ENCODE measurements at regions of chr19 and their contacts with region 1.

Region 1: GRCh38 chr19:38975214-38975860 is at the start of gene FBXO17:
- DNase-seq: peak; percentile 84 to 87
- ATAC-seq: peak; percentile 83
- H3K4me3 ChIP-seq: peak within 1 kb of the TSS; percentile 51
- H3K27ac ChIP-seq: peak within 1 kb of the TSS; percentile 91 to 94
- H3K4me1 ChIP-seq: peaks cover 51% of the 10 kb centered on the region
- CTCF ChIP-seq: no peak; the same call in 2 of the 3 replicates
- EP300 ChIP-seq: 0 out of 5 replicates have a peak, but pooled peaks of 1 of the 2 experiments have one; percentile 6
- POLR2A ChIP-seq: peak; percentile 41
- RAD21 ChIP-seq: 0 out of 5 replicates have a peak, but pooled peaks have one; percentile 11 to 16
- polyA plus RNA-seq, gene FBXO17: 68.1 and 73.1 TPM in 2 replicates

Region 2: DNA sequence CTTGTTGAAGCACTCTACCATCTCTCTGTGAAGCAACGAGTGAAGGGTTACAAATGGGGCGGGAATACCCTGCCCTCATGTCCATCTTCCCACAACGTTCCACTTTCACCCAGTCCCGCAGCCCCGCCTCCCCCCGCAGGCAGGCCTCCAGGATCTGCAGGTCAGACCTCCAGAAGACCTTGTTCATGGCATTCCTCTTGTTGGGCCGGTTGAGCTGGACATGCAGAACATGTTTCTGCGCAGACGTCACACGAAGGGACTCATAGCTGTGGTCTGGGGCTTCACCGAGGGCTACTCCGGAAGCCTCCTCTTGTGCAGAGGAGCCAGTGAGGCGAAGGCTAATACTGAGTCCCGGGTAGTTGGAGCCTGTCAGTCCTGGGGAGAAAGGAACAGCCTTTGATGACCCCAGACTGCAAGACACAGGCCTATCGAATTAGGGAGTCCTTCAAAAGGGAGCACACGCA is 144.2 kb before region 1 on chr19:
- CTCF ChIA-PET with region 1: no interaction called
- POLR2A ChIA-PET with region 1: no interaction called
- DNase-seq: peak; percentile 73 to 78
- ATAC-seq: peak; percentile 57 to 58
- H3K4me3 ChIP-seq: peak overlapping the region; percentile 55
- H3K27ac ChIP-seq: peak overlapping the region; percentile 88
- H3K4me1 ChIP-seq: peaks cover 49% of the 10 kb centered on the region
- CTCF ChIP-seq: no peak
- EP300 ChIP-seq: no peak
- POLR2A ChIP-seq: no peak
- RAD21 ChIP-seq: no peak

Region 3: DNA sequence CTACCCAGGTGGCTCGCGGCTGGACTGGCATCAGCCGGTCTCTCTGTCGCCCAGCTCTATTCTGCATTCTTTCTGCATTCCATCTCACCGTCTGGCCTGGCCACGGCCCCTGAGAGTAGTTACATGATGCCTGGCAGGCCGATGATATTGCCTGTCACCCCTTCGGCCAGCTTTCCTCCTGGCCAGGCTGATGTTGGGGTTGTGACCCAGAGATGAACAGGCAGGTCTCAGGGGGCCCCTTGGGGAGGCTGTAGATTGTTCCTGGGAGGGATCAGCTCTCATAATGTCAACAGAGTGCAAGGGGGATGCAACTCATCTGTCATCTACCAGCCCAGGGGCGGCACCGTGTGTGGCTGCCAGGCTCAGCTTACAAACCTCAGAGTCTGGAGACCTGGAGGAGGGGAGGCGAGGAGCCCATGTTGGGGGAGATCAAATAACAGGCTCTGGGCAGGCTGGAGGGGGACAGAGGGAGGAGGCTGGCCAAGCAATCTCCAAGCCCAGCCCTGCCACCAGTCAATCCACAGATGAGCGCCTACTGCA is 13.8 kb after region 1 on chr19:
- CTCF ChIA-PET with region 1: interaction called, 344 read pairs
- POLR2A ChIA-PET with region 1: interaction called, 15 read pairs
- DNase-seq: peak in 1 of 2 experiments; percentile 55
- ATAC-seq: peak; percentile 72 to 76
- H3K4me3 ChIP-seq: no peak overlapping the region
- H3K27ac ChIP-seq: peak overlapping the region; percentile 21 to 71; a peak in 3 of 6 replicates
- H3K4me1 ChIP-seq: peaks cover 37% of the 10 kb centered on the region
- CTCF ChIP-seq: no peak
- EP300 ChIP-seq: no peak
- POLR2A ChIP-seq: no peak
- RAD21 ChIP-seq: no peak

Region 4: GRCh38 chr19:39008137-39008536 is 32.8 kb after region 1 on chr19:
- CTCF ChIA-PET with region 1: interaction called, 31 read pairs
- POLR2A ChIA-PET with region 1: no interaction called
- DNase-seq: no peak
- ATAC-seq: no peak
- H3K4me3 ChIP-seq: no peak overlapping the region
- H3K27ac ChIP-seq: no peak overlapping the region
- H3K4me1 ChIP-seq: no peaks in the 10 kb centered on the region
- CTCF ChIP-seq: no peak
- EP300 ChIP-seq: no peak
- POLR2A ChIP-seq: no peak
- RAD21 ChIP-seq: no peak

Region 5: GRCh38 chr19:39021063-39021462 is 45.7 kb after region 1 on chr19:
- CTCF ChIA-PET with region 1: interaction called, 30 read pairs
- POLR2A ChIA-PET with region 1: interaction called, 4 read pairs
- DNase-seq: no peak
- ATAC-seq: no peak
- H3K4me3 ChIP-seq: no peak overlapping the region
- H3K27ac ChIP-seq: no peak overlapping the region
- H3K4me1 ChIP-seq: no peaks in the 10 kb centered on the region
- CTCF ChIP-seq: no peak
- EP300 ChIP-seq: no peak
- POLR2A ChIP-seq: no peak
- RAD21 ChIP-seq: no peak

Region 6: GRCh38 chr19:39078436-39079200 is 103.3 kb after region 1 on chr19:
- CTCF ChIA-PET with region 1: interaction called, 26 read pairs
- POLR2A ChIA-PET with region 1: interaction called, 4 read pairs
- DNase-seq: peak; percentile 94 to 96
- ATAC-seq: peak; percentile 83 to 86
- H3K4me3 ChIP-seq: no peak overlapping the region
- H3K27ac ChIP-seq: peak overlapping the region; percentile 84 to 86
- H3K4me1 ChIP-seq: peaks cover 56% of the 10 kb centered on the region
- CTCF ChIP-seq: no peak
- EP300 ChIP-seq: peak; percentile 95 to 97; a peak in 4 of 5 replicates
- POLR2A ChIP-seq: no peak
- RAD21 ChIP-seq: no peak; a peak in 1 of 5 replicates

Region 7: DNA sequence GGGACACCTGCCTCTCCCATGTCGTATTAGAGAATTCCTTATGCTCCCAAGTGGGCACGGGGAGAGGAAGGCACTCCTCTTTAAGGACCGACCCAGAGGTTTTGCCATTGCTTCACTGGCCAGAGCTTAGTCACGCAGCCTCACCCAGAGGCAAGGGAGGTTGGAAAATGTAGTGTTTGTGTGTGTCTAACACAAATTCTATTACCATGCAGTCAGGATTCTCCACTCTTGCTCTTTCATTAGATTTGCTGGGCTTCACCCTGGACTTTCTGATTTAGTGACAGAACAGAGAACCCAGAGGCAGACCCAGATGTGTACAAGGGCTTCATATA is 206.8 kb after region 1 on chr19:
- CTCF ChIA-PET with region 1: interaction called, 11 read pairs
- POLR2A ChIA-PET with region 1: no interaction called
- DNase-seq: no peak
- ATAC-seq: peak; percentile 6 to 20; a peak in 4 of 6 replicates
- H3K4me3 ChIP-seq: no peak overlapping the region
- H3K27ac ChIP-seq: peak overlapping the region in 1 of 2 experiments; percentile 9; a peak in 2 of 6 replicates
- H3K4me1 ChIP-seq: no peaks in the 10 kb centered on the region
- CTCF ChIP-seq: no peak
- EP300 ChIP-seq: no peak
- POLR2A ChIP-seq: no peak
- RAD21 ChIP-seq: no peak